G401 (cell line): ENCODE measurements at regions of chr12 and their contacts with region 1.

Region 1: DNA sequence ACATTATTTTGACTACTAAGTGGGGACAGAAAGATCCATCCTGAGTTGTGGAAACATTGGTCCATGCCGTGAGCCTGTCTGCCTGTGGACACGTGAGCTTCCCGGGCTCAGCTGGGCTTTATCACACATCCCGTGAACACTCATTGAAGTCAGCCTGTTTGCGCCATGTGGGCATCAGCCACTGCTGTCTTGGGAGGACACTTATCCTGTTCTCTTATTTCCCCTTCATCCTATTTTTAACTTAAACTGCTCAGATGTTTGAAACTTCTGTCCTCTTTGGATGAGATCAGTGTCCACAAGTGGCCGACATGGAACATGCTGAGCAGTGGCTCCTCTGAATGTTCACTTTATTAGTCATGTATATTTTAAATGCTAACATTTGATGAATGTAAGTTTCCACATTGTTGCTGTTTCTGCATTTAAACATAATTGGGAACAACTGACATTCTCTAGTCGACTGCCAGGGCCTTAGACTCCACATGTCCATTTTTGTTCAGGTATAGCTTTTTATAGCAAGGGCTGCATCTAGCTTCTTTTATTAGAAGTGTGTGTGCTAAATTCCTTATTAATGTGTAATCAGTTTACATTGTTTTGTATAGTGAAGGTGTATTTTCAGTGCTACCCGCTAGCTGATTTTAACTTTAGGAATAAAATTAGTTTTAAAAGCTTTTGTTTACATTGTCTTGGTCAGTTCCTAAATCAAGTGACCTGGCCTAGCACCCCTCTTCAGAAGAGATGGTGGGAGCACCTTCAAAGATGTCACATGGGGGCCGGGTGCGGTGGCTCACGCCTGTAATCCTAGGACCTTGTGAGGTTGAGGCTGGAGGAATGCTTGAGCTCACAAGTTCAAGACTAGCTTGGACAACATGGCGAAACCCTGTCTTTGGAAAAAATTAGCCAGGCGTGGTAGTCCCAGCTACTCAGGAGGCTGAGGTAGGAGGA is 24.0 kb downstream of the RNF34 start:
- DNase-seq: no peak

Region 2: GRCh38 chr12:121279507-121279915 is 144.4 kb before region 1 on chr12:
- in situ Hi-C with region 1: no loop called
- DNase-seq: peak; percentile 98

Region 3: GRCh38 chr12:121351820-121352681 is 71.9 kb before region 1 on chr12 and contains the start of gene ANAPC5:
- in situ Hi-C with region 1: no loop called
- DNase-seq: peak; percentile 99
- total RNA-seq, gene ANAPC5: 129 and 154 TPM in 2 replicates

Region 4: DNA sequence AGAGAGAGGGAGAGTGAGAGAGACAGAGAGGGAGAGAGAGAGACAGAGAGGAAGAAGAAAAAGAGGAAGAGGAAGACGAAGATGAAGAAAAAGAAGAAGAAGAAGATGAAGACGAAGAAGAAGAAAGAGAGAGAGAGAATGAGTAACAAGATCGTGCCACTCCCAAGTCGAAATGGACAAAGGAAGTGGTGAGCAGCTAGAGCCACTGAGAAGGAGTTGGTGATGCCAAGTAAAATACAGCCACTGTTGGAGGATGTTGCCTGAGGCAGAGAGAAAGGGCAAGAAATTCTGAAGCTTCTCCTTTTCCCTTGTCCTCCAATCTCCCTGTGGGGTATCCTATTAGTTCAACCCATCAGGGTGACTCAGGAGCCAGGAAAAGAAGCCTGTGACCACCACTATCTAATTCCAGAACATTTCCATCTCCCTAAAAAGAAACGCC is 59.3 kb before region 1 on chr12:
- in situ Hi-C with region 1: loop called (anchors 10 kb)
- DNase-seq: no peak